Activated T-helper 1 cell treated with anti-CD3 and anti-CD28 coated beads, Interleukin-12 subunit alpha, Interleukin-12 subunit beta, Interleukin-2, Interleukin-4 antibody, amounts not matched to agents 30 ng/mL and 10 ng/mL and 1 ng/mL, durations not matched to agents 14 hours and 24 hours and 36 hours (primary cell): ENCODE measurements at regions of chr4 and their contacts with region 1.

Region 1: DNA sequence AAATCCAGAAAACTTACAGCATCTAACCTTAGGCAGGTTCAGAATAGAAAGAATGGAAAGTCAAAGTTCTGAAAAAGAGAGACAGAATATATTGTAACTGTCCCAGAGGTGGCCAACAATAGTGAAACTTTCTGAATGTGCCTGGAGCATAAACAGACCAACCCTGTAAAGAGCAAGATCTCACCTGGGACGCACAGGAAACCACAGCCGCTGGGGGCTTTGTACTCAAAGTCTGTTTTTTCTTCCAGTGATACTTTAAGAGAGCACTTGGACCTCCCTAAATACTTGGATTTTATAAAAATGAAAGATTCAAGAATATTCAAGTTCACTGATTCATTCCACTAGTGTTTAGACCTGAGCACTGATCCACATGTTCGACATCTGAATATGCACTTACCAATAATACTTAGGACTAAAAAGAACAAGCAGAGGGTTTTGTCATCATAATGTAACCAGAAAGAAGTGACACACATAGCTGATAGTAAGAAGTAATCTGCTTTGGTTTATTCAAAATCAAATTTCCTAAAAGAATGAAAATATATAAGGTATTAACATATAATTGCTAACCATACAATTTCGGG is 35.3 kb downstream of the ARAP2 start:
- DNase-seq: peak; percentile 10
- H3K4me3 Mint-ChIP-seq: peak overlapping the region; percentile 56
- H3K27ac Mint-ChIP-seq: peak overlapping the region; percentile 70
- H3K4me1 Mint-ChIP-seq: peaks cover 64% of the 10 kb centered on the region
- H3K27me3 Mint-ChIP-seq: no peaks in the 10 kb centered on the region

Region 2: DNA sequence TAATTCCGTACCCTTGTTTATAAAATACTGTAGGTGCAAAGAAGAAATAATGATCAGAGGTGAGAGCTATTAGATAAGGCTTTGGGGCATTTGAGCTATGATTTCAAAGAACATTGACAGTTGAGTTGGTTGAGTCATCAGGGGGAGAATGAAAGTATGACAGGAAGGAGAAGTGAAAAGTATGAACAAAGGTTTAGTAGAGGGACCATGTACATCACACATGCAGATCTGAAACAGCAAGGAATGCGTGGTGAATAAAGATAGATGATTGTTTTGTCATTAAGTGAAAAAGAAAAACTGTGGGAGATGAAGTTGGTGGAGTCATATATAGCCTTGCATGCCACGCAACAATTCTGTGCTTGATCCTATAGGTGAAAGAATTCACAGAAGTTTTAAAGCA is 127.8 kb before region 1 on chr4:
- intact Hi-C with region 1: loop called (anchors 5 kb)
- DNase-seq: no peak
- H3K4me3 Mint-ChIP-seq: no peak overlapping the region
- H3K27ac Mint-ChIP-seq: no peak overlapping the region
- H3K4me1 Mint-ChIP-seq: peaks cover 3% of the 10 kb centered on the region
- H3K27me3 Mint-ChIP-seq: no peaks in the 10 kb centered on the region

Region 3: DNA sequence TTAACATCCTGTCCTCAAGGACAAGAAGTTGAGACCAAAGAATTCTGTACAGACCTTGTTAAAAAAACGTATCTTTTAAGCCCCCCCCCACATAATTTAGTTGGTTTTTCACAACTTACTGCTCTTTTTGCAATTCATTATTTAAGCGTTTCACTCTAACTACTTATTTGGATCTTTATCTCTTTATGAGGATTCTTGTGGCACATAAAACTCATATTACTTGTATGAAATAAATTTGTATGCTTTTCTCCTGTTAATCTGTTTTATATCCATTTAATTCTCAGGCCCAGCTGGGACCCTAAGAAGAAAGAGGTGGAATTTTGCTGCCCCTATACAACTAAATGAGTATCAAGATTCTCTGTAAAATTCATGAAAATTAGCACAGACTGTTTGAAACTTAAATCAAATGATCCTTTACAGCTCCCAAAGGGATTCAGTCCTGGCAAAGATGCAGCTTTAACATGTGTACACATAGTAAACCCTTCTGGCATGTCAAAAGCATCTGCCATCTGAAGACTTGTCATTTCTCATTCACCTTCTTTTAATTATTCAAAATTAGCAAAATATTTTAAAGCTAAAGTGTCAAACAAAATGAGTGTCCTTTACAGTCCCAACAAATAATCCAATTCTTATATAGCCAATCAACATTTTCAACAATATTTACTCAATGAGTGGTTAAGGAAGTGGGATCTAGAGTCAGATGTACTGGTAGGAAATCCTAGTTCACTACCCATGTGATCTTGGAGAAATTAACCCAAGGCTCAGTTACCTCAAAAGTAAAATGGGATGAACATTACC is 17.6 kb after region 1 on chr4:
- intact Hi-C with region 1: loop called (anchors 2 kb)
- DNase-seq: no peak
- H3K4me3 Mint-ChIP-seq: no peak overlapping the region
- H3K27ac Mint-ChIP-seq: no peak overlapping the region
- H3K4me1 Mint-ChIP-seq: peaks cover 49% of the 10 kb centered on the region
- H3K27me3 Mint-ChIP-seq: no peaks in the 10 kb centered on the region

Region 4: DNA sequence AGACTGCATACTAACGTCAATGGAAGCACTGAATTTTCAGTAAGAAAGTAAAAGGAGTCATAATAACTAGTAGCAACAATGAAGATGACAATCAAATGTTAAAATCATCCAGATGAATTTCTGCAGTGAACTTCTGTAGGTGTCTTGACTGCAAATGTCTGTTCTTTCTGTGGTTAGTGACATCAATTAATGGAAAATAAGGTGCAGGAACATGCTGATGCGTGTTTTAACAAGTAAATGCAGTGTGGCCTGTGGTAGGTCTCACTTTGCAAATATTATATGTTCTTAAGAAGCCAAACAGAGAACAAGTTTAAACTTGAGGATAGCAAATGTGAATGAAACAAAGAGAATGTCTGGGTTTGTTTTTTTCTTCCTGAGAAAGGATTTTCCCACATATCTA is 69.8 kb after region 1 on chr4:
- intact Hi-C with region 1: loop called (anchors 2 kb)
- DNase-seq: no peak
- H3K4me3 Mint-ChIP-seq: peak overlapping the region; percentile 72
- H3K27ac Mint-ChIP-seq: peak overlapping the region; percentile 82
- H3K4me1 Mint-ChIP-seq: peaks cover 75% of the 10 kb centered on the region
- H3K27me3 Mint-ChIP-seq: no peaks in the 10 kb centered on the region

Region 5: GRCh38 chr4:36556984-36557383 is 348.0 kb after region 1 on chr4:
- intact Hi-C with region 1: no loop called
- DNase-seq: no peak
- H3K4me3 Mint-ChIP-seq: no peak overlapping the region
- H3K27ac Mint-ChIP-seq: no peak overlapping the region
- H3K4me1 Mint-ChIP-seq: peaks cover 3% of the 10 kb centered on the region
- H3K27me3 Mint-ChIP-seq: no peaks in the 10 kb centered on the region